BJ (cell line): ENCODE measurements at regions of chr20 and their contacts with region 1.

Region 1: DNA sequence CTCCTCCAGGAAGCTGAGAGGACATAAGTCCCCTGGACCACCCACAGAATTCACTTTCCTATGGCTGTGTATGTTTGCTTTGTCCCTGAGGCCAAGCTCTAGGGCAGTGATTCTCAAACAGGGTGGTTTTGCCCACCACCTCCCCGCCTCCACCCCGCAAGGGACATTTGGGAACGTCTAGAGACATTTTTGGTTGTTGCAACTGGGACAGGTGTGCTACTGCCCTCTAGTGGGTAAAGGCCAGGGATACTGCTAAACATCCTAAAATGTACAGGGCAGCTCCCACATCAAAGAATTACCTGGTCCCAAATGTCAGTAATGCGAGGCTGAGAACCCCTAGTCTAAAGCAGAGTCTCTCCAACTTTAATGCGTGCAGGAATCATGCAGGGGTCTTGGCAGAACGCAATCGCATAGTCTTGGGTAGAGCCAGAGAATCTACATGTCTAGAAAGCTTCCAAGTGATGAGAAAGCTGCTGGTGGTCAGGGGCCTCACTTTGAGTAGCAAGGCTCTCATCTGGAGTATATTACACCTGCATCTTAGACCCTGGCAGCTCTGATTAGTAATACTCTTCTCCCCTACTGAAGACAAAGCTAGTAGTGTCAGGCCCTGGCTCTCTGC is 5.1 kb downstream of the KCNS1 start:
- DNase-seq: no peak
- H3K4me3 ChIP-seq: no peak overlapping the region
- H3K27me3 ChIP-seq: peaks cover 2% of the 10 kb centered on the region; the same call in 1 of the 2 replicates
- CTCF ChIP-seq: peak; percentile 87

Region 2: DNA sequence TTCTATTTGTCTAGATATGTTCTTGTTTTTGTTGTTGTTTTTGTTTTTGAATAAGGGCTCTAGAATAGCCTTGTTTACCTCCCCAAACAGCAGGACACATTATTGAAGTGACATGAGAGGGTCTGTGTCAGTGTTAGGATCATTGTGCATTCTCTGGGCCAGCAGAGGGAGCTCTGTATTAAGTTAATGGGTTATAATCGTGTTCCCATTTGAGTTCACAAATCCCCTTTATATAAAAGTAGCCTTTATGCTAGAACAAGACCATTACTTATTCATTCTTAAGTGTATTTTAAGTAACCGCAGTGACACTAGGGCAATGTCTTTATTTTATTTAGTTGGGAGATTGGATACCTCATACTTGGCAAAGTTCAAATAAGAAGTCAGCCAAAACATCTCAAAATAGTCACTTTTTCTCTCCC is 84.7 kb before region 1 on chr20:
- CTCF ChIA-PET with region 1: interaction called, 106 read pairs
- POLR2A ChIA-PET with region 1: no interaction called
- DNase-seq: no peak
- H3K4me3 ChIP-seq: no peak overlapping the region
- H3K27me3 ChIP-seq: no peaks in the 10 kb centered on the region
- CTCF ChIP-seq: peak; percentile 71

Region 3: DNA sequence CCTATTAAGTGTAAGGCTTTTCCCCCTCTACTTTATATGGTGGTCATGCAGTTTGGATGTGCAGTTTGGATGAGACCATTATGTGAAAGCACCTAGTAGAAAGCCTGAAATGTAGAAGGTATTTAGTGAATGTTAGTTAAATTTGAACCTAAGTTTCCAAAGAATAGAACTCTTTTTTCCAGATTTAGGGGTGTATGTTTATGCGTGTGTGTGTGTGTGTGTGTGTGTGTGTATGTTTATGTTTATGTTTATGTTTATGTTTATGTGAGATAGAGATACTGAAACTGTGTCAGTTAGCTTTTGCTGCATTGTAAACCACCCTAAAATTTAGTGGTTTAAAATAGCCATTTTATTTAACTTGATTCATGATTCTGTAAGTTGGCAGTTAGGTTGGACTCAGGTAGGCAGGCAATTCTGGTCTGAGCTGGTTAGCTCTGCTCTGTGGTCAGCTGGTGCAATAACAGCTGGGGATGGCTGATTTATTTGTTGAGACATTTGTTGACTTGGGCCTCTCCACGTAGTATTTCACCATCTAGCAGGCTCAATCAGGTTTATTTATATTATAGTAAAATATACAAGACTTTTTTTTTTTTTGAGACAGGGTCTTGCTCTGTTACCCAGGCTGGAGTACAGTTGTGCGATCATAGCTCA is 75.5 kb before region 1 on chr20:
- CTCF ChIA-PET with region 1: interaction called, 106 read pairs
- POLR2A ChIA-PET with region 1: no interaction called
- DNase-seq: no peak
- H3K4me3 ChIP-seq: no peak overlapping the region
- H3K27me3 ChIP-seq: no peaks in the 10 kb centered on the region
- CTCF ChIP-seq: no peak

Region 4: DNA sequence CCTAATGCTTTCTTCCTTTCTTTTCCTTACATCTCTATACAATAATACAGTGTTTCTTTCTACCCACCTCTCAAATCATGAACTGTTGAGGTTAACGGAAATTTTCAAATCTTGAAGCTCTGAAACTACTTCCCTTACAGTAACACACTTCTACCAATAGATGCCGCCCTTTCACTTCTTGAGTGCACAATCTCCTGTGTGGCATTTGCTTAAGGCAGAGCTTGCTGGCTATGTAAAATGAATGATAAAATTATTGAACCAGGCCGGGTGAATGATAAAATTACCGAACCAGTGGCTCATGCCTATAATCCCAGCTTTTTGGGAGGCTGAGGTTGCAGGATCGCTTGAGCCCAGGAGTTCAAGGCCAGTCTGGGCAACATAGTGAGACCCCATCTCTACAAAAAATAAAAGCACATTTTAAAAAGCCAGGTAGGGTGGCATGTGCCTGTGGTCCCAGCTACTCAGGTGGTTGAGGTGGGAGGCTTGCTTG is 51.7 kb before region 1 on chr20:
- CTCF ChIA-PET with region 1: interaction called, 407 read pairs
- POLR2A ChIA-PET with region 1: no interaction called
- DNase-seq: no peak
- H3K4me3 ChIP-seq: no peak overlapping the region
- H3K27me3 ChIP-seq: no peaks in the 10 kb centered on the region
- CTCF ChIP-seq: peak; percentile 87

Region 5: DNA sequence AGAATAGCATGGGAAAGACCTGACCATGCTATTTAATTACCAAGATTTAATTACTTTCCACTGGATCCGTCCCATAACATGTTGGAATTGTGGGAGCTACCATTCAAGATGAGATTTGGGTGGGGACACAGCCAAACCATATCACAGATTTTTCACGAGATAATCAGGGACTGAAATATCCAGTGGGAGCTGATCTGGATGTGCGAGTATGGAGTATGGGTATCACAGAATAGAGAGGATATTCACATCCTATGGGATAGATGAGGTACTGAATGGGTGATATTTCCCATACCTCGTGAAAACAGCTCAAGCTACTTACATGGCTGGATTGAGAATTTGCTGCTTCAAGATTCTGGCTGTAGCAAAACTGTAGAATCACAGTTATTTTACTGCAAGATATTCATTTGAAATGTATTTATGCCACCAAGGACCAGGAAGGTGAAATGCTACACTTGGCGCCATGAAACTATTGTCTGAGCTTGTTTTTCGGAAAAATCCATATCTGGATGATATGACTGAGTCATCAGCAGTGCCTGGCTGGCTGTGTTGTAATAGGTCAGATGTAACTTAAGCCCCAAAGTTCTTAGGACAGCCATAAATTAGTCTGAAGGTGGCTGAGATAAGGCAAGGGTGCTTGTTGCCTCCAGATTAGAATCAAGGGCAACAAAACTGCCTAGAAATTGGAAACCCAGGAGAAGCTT is 24.8 kb before region 1 on chr20:
- CTCF ChIA-PET with region 1: interaction called, 11 read pairs
- POLR2A ChIA-PET with region 1: no interaction called
- DNase-seq: no peak
- H3K4me3 ChIP-seq: no peak overlapping the region
- H3K27me3 ChIP-seq: no peaks in the 10 kb centered on the region
- CTCF ChIP-seq: no peak

Region 6: GRCh38 chr20:45080867-45081624 is 14.8 kb before region 1 on chr20:
- CTCF ChIA-PET with region 1: interaction called, 11 read pairs
- POLR2A ChIA-PET with region 1: no interaction called
- DNase-seq: no peak
- H3K4me3 ChIP-seq: no peak overlapping the region
- H3K27me3 ChIP-seq: no peaks in the 10 kb centered on the region
- CTCF ChIP-seq: peak; percentile 54

Region 7: GRCh38 chr20:45111799-45112471 is 16.1 kb after region 1 on chr20:
- CTCF ChIA-PET with region 1: interaction called, 46 read pairs
- POLR2A ChIA-PET with region 1: no interaction called
- DNase-seq: no peak
- H3K4me3 ChIP-seq: no peak overlapping the region
- H3K27me3 ChIP-seq: peaks cover 14% of the 10 kb centered on the region
- CTCF ChIP-seq: peak; percentile 62

Region 8: GRCh38 chr20:46139908-46140482 is 1044.1 kb after region 1 on chr20:
- CTCF ChIA-PET with region 1: no interaction called
- POLR2A ChIA-PET with region 1: no interaction called
- DNase-seq: no peak
- H3K4me3 ChIP-seq: no peak overlapping the region
- H3K27me3 ChIP-seq: peaks cover 10% of the 10 kb centered on the region
- CTCF ChIP-seq: no peak